ENCODE measurements at regions of chr7 and their contacts with region 1.

Region 1: DNA sequence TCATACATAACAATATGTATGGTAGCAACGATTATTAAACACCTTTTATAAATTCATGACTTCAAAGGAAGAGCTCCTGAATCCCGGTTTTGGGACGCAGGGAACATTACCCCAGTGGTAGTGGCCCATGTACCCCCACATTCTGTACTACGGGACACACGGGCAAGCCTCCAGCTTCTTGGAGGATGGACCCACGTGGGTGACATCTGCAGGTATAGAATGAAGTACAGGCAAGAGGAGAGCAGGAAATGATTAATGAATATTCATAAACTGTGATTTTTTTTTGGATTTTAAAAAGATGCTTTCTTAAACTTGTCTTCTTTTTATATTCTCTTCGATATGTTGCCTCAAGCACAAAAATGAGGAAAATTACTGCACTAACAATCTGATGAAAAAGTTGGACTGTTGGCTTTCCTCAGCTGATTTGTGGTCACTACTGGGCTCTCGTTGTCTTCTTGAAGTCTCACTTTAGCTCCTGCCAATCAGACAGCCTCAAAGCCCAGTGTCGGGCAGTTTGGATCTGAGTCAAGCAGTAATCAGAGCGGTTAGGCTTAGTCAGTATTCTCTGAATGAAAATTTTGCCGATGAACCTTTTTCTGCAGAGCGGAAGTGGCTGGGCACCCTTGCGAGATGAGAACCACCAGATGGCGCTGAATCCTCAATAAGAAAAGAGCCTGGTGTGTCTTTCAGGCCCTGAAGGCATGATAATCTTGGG is 157.7 kb upstream of the CDCA7L start:
- DNase-seq: peak; percentile 75
- H3K4me3 ChIP-seq: peak overlapping the region in 1 of 2 experiments; percentile 15; a peak in 1 of 4 replicates
- H3K27ac ChIP-seq: no peak overlapping the region
- H3K4me1 ChIP-seq: peaks cover 0 to 2% of the 10 kb centered on the region in 2 experiments; a peak in 1 of 4 replicates
- H3K27me3 ChIP-seq: peaks cover 21% of the 10 kb centered on the region; the same call in 1 of the 2 replicates
- CTCF ChIP-seq: peak; percentile 99
- EP300 ChIP-seq: no peak
- RAD21 ChIP-seq: peak; percentile 88

Region 2: DNA sequence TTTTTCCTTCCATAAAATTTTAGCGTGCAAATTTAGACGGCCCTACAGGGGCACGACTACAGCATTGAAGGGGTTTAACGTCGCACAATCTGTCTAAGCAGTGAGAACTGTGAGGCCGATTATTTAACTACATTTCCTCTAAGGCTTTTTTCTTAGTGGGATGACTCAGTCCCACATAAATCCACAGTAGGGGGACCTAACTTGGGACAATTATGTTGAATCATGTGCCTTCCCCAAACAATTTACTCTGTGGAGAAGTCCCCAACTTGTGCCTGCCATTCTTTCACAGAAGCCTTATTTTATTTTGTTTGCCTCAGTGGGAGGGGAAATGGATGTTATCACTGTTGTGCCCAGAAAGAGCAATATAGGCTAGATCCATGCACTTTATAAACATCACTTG is 77.4 kb before region 1 on chr7:
- CTCF ChIA-PET with region 1: no interaction called
- POLR2A ChIA-PET with region 1: no interaction called
- DNase-seq: no peak
- H3K4me3 ChIP-seq: no peak overlapping the region
- H3K27ac ChIP-seq: no peak overlapping the region
- H3K4me1 ChIP-seq: no peaks in the 10 kb centered on the region
- H3K27me3 ChIP-seq: peaks cover 50% of the 10 kb centered on the region
- CTCF ChIP-seq: no peak
- EP300 ChIP-seq: no peak
- RAD21 ChIP-seq: no peak

Region 3: DNA sequence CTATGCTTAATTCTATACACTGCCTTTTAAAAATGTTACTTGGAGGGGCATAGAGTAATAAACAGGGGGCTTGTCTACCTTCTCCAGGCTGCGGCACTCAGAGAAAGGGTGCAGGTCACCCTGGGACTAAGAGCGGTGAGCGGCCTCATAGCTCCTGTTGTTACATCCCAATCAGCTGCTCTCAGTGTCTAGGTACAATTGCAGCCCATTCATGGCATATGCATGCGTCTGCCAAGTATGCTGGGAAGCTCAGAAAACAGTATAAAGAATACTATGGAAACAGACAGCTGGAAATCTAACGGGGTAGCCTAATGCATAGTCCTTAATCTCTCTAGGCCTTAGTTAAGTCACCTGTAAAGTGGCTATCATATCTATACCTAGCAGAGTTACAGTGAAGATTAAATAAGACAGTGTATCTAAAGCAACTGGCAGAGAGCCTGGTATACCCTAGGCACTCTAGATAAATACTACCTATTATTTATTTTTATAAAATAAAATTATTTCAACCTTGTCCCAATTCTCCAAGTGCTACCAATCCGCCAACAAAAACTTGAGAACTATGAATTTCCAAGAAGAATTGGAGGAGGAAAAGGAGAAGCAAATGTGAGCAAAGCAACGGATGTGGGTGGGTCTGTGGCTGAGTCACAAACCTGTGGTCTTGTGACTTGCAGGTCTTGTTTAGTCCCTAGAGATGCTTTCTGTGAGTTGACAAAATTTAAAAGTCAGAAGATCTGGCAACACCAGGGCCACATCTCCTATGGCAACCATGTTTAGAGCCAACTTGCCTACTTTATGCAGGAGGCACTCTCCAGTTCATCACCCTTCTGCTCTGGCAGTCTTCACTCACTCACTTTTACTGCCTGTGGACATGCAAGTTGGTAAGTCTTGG is 70.5 kb after region 1 on chr7:
- CTCF ChIA-PET with region 1: no interaction called
- POLR2A ChIA-PET with region 1: no interaction called
- DNase-seq: no peak
- H3K4me3 ChIP-seq: no peak overlapping the region
- H3K27ac ChIP-seq: no peak overlapping the region
- H3K4me1 ChIP-seq: no peaks in the 10 kb centered on the region
- H3K27me3 ChIP-seq: no peaks in the 10 kb centered on the region
- CTCF ChIP-seq: no peak
- EP300 ChIP-seq: no peak
- RAD21 ChIP-seq: no peak

Region 4: GRCh38 chr7:22193450-22193983 is 90.1 kb after region 1 on chr7:
- CTCF ChIA-PET with region 1: no interaction called
- POLR2A ChIA-PET with region 1: no interaction called
- DNase-seq: no peak
- H3K4me3 ChIP-seq: no peak overlapping the region
- H3K27ac ChIP-seq: no peak overlapping the region
- H3K4me1 ChIP-seq: peaks cover 0 to 4% of the 10 kb centered on the region in 2 experiments; a peak in 1 of 4 replicates
- H3K27me3 ChIP-seq: no peaks in the 10 kb centered on the region
- CTCF ChIP-seq: no peak
- EP300 ChIP-seq: no peak
- RAD21 ChIP-seq: no peak

Region 5: DNA sequence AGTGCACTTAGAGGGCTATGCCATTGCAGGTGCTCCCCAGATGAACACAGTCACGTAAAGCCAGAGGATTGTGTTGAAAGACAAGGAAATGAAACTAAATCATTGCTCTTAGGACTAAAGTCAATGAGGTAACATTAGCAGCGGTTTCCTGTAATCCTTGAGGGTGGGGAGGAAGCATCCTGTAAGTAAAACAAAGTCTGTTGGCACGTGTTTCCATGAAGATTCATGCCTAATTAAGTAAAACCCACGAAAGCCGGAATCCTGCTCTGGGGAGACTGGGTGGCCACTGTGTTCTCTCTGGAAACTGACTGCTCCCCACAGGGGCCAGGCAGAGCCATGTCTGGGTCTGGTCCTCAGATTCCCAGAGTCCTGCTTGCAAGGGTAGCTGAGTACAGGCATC is 378.3 kb after region 1 on chr7:
- CTCF ChIA-PET with region 1: interaction called, 203 read pairs
- POLR2A ChIA-PET with region 1: no interaction called
- DNase-seq: no peak
- H3K4me3 ChIP-seq: no peak overlapping the region
- H3K27ac ChIP-seq: no peak overlapping the region
- H3K4me1 ChIP-seq: peaks cover 14% of the 10 kb centered on the region in 2 experiments; a peak in 3 of 4 replicates
- H3K27me3 ChIP-seq: no peaks in the 10 kb centered on the region
- CTCF ChIP-seq: no peak
- EP300 ChIP-seq: no peak
- RAD21 ChIP-seq: no peak

Region 6: DNA sequence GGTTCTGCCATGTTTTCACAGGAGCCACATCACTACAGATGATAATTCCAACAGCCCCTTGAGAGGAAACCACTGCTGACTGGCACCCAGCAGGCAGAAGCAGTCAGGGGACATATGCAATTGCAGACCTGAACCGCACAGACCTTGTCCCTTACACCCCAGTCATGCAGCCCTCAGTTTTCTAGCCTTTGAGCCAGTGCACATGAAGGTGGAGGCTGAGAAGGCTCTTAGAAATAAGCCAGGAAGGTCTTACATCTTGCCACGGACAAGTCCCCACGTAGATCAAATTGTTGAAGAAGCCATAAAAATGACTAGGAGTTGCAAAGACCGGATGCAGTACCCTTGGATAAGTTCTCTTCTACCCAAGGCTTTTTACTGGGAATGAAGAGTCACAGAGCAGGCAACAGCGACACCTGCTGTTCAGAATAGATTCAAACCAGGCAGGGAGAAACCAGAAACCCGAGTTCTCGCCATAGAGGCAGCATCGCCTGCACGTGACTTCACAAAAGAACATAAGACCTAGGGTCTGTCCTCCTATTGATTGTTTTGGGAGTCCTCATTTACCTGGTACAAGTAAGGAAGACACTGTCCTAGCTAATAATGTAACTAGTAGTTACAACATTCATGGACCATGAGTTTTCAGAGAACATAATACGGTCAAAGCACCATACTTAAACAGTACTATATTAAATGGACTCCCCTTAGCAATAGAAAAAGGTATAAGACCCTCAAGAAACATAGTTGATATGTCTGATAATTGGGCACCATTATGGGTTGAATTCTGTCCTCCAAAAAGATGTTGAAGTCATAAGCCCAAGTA is 385.4 kb after region 1 on chr7:
- CTCF ChIA-PET with region 1: interaction called, 203 read pairs
- POLR2A ChIA-PET with region 1: no interaction called
- DNase-seq: peak; percentile 79
- H3K4me3 ChIP-seq: no peak overlapping the region
- H3K27ac ChIP-seq: no peak overlapping the region
- H3K4me1 ChIP-seq: peaks cover 0 to 15% of the 10 kb centered on the region in 2 experiments; a peak in 2 of 4 replicates
- H3K27me3 ChIP-seq: no peaks in the 10 kb centered on the region
- CTCF ChIP-seq: peak; percentile 99
- EP300 ChIP-seq: no peak
- RAD21 ChIP-seq: peak; percentile 100

Region 7: GRCh38 chr7:22499044-22499443 is 395.6 kb after region 1 on chr7:
- CTCF ChIA-PET with region 1: interaction called, 69 read pairs
- POLR2A ChIA-PET with region 1: no interaction called
- DNase-seq: no peak
- H3K4me3 ChIP-seq: peak overlapping the region in 1 of 2 experiments; percentile 62; a peak in 3 of 4 replicates
- H3K27ac ChIP-seq: peak overlapping the region in 1 of 2 experiments; percentile 91; a peak in 2 of 4 replicates
- H3K4me1 ChIP-seq: peaks cover 3 to 28% of the 10 kb centered on the region in 2 experiments; a peak in 3 of 4 replicates
- H3K27me3 ChIP-seq: peaks cover under 1% of the 10 kb centered on the region; the same call in 1 of the 2 replicates
- CTCF ChIP-seq: no peak
- EP300 ChIP-seq: no peak
- RAD21 ChIP-seq: no peak

Region 8: GRCh38 chr7:22613496-22613895 is 510.1 kb after region 1 on chr7:
- CTCF ChIA-PET with region 1: no interaction called
- POLR2A ChIA-PET with region 1: no interaction called
- DNase-seq: no peak
- H3K4me3 ChIP-seq: no peak overlapping the region
- H3K27ac ChIP-seq: peak overlapping the region in 1 of 2 experiments; percentile 61; a peak in 1 of 4 replicates
- H3K4me1 ChIP-seq: no peaks in the 10 kb centered on the region; a peak in 1 of 4 replicates
- H3K27me3 ChIP-seq: no peaks in the 10 kb centered on the region
- CTCF ChIP-seq: no peak
- EP300 ChIP-seq: no peak
- RAD21 ChIP-seq: no peak